ENCODE measurements at regions of chr12 and their contacts with region 1.

Region 1: GRCh38 chr12:49288412-49288853 is 6.5 kb upstream of the PRPH start:
- DNase-seq: peak; percentile 61 to 75 (median 68)
- H3K4me3 ChIP-seq: no peak overlapping the region
- H3K4me3 Mint-ChIP-seq: no peak overlapping the region
- H3K27ac ChIP-seq: no peak overlapping the region
- H3K27ac Mint-ChIP-seq: peak overlapping the region in 1 of 7 donors; percentile 36
- H3K4me1 ChIP-seq: no peaks in the 10 kb centered on the region
- H3K4me1 Mint-ChIP-seq: peaks cover 0 to 4% (median 2%) of the 10 kb centered on the region in 4 donors
- H3K27me3 ChIP-seq: no peaks in the 10 kb centered on the region
- H3K27me3 Mint-ChIP-seq: peaks cover 20% of the 10 kb centered on the region in 2 donors

Region 2: GRCh38 chr12:49010092-49010668 is 278.3 kb before region 1 on chr12:
- CTCF ChIA-PET with region 1: no interaction called
- POLR2A ChIA-PET with region 1: no interaction called
- intact Hi-C with region 1: no loop called
- DNase-seq: no peak
- H3K4me3 ChIP-seq: no peak overlapping the region
- H3K4me3 Mint-ChIP-seq: no peak overlapping the region
- H3K27ac ChIP-seq: no peak overlapping the region
- H3K27ac Mint-ChIP-seq: peak overlapping the region in 1 of 7 donors; percentile 13
- H3K4me1 ChIP-seq: no peaks in the 10 kb centered on the region
- H3K4me1 Mint-ChIP-seq: peaks cover 3 to 10% (median 4%) of the 10 kb centered on the region in 4 donors
- H3K27me3 ChIP-seq: no peaks in the 10 kb centered on the region
- H3K27me3 Mint-ChIP-seq: no peaks in the 10 kb centered on the region

Region 3: GRCh38 chr12:49200919-49201594 is 87.4 kb before region 1 on chr12:
- CTCF ChIA-PET with region 1: no interaction called
- POLR2A ChIA-PET with region 1: no interaction called
- intact Hi-C with region 1: no loop called
- DNase-seq: peak; percentile 38 to 59 (median 47)
- H3K4me3 ChIP-seq: no peak overlapping the region
- H3K4me3 Mint-ChIP-seq: peak overlapping the region in 3 of 8 donors; percentile 4 to 71 (median 6)
- H3K27ac ChIP-seq: no peak overlapping the region
- H3K27ac Mint-ChIP-seq: peak overlapping the region in 5 of 7 donors; percentile 27 to 62 (median 33)
- H3K4me1 ChIP-seq: peaks cover 14% of the 10 kb centered on the region
- H3K4me1 Mint-ChIP-seq: peaks cover 10 to 13% (median 12%) of the 10 kb centered on the region in 4 donors
- H3K27me3 ChIP-seq: no peaks in the 10 kb centered on the region
- H3K27me3 Mint-ChIP-seq: peaks cover under 1 to 6% of the 10 kb centered on the region in 2 donors

Region 4: DNA sequence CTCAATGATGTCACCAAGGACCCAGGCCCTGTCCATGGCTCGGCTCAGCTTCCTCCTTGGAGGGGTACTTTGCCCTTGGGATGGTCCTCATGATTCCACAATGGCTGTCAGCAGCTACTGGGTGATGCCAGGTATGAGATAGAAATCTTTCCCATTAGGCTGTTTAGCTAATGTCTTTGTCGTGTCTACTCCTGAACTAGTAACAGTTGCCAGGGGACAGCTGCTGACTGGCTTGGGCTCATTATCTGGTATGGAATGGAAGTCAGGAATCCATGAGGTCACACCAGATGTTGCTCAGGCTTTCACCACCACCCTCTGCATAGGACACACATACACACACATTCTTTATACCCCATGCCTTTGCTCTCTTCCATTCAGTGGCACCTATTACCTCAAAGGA is 15.7 kb after region 1 on chr12:
- CTCF ChIA-PET with region 1: interaction called, 11 read pairs
- POLR2A ChIA-PET with region 1: no interaction called
- intact Hi-C with region 1: no loop called
- DNase-seq: no peak
- H3K4me3 ChIP-seq: no peak overlapping the region
- H3K4me3 Mint-ChIP-seq: no peak overlapping the region
- H3K27ac ChIP-seq: no peak overlapping the region
- H3K27ac Mint-ChIP-seq: no peak overlapping the region
- H3K4me1 ChIP-seq: no peaks in the 10 kb centered on the region
- H3K4me1 Mint-ChIP-seq: peaks cover 4 to 5% (median 4%) of the 10 kb centered on the region in 4 donors
- H3K27me3 ChIP-seq: no peaks in the 10 kb centered on the region
- H3K27me3 Mint-ChIP-seq: peaks cover 19 to 32% of the 10 kb centered on the region in 2 donors

Region 5: GRCh38 chr12:49331380-49332222 is 43.2 kb after region 1 on chr12:
- CTCF ChIA-PET with region 1: interaction called, 67 read pairs
- POLR2A ChIA-PET with region 1: no interaction called
- intact Hi-C with region 1: no loop called
- DNase-seq: no peak
- H3K4me3 ChIP-seq: no peak overlapping the region
- H3K4me3 Mint-ChIP-seq: no peak overlapping the region
- H3K27ac ChIP-seq: no peak overlapping the region
- H3K27ac Mint-ChIP-seq: no peak overlapping the region
- H3K4me1 ChIP-seq: peaks cover 6% of the 10 kb centered on the region
- H3K4me1 Mint-ChIP-seq: peaks cover 9 to 12% (median 10%) of the 10 kb centered on the region in 4 donors
- H3K27me3 ChIP-seq: peaks cover 20% of the 10 kb centered on the region
- H3K27me3 Mint-ChIP-seq: peaks cover 28 to 35% of the 10 kb centered on the region in 2 donors

Region 6: DNA sequence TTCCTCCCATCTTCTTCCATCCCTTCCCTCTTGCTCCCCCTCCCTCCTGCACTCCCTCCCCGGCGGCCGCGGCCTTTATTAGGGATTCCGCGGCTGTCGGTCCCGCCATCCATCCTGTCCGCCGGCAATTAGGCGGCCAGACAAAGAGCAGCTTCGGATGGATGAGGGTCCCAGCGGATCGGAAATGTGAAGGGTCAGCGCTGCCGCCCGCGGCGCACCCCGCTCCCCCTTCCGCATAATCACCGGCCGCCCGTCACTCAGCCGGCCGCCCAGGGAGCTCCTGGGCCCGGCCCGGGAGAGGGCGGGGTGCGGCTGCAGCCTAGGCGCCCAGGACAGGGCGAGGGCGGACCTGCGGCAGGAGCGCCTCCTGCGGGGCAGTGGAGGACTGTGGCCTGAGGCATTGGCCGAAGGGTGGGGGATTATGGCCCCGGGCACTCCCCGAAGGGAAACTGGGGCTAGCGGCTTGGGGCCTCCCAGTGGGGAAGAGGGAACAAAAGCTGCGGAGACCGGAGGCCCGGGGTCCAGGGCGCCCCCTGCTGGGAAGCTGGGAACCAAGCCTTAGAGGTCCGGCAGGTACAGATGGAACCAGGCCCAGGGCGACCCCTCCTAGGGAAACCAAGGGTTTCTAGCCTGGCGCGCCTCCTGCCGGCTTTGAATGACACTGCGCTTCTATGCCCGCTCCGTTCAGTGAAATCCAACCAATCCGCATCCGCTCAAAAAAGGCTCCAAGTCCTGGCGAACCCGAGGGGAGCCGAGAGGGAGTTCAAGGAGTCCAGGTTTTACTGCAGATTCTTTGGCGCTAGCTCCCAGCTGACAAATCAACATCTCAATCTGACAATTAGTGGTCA is 53.9 kb after region 1 on chr12:
- CTCF ChIA-PET with region 1: interaction called, 70 read pairs
- POLR2A ChIA-PET with region 1: interaction called, 6 read pairs
- intact Hi-C with region 1: loop called (anchors 1 kb)
- DNase-seq: peak; percentile 60 to 75 (median 64)
- H3K4me3 ChIP-seq: peak overlapping the region; percentile 30 to 53
- H3K4me3 Mint-ChIP-seq: peak overlapping the region; percentile 49 to 89 (median 78)
- H3K27ac ChIP-seq: no peak overlapping the region
- H3K27ac Mint-ChIP-seq: peak overlapping the region in 4 of 7 donors; percentile 55 to 79 (median 65)
- H3K4me1 ChIP-seq: peaks cover 52% of the 10 kb centered on the region
- H3K4me1 Mint-ChIP-seq: peaks cover 19 to 64% (median 40%) of the 10 kb centered on the region in 4 donors
- H3K27me3 ChIP-seq: peaks cover 47% of the 10 kb centered on the region
- H3K27me3 Mint-ChIP-seq: peaks cover 25 to 56% of the 10 kb centered on the region in 2 donors

Region 7: GRCh38 chr12:49515266-49515665 is 226.8 kb after region 1 on chr12:
- CTCF ChIA-PET with region 1: interaction called, 42 read pairs
- POLR2A ChIA-PET with region 1: no interaction called
- intact Hi-C with region 1: loop called (anchors 1 kb)
- DNase-seq: no peak
- H3K4me3 ChIP-seq: no peak overlapping the region
- H3K4me3 Mint-ChIP-seq: no peak overlapping the region
- H3K27ac ChIP-seq: no peak overlapping the region
- H3K27ac Mint-ChIP-seq: no peak overlapping the region
- H3K4me1 ChIP-seq: no peaks in the 10 kb centered on the region
- H3K4me1 Mint-ChIP-seq: no peaks in the 10 kb centered on the region
- H3K27me3 ChIP-seq: no peaks in the 10 kb centered on the region
- H3K27me3 Mint-ChIP-seq: no peaks in the 10 kb centered on the region